ENCODE measurements at regions of chr5 and their contacts with region 1.

Region 1: DNA sequence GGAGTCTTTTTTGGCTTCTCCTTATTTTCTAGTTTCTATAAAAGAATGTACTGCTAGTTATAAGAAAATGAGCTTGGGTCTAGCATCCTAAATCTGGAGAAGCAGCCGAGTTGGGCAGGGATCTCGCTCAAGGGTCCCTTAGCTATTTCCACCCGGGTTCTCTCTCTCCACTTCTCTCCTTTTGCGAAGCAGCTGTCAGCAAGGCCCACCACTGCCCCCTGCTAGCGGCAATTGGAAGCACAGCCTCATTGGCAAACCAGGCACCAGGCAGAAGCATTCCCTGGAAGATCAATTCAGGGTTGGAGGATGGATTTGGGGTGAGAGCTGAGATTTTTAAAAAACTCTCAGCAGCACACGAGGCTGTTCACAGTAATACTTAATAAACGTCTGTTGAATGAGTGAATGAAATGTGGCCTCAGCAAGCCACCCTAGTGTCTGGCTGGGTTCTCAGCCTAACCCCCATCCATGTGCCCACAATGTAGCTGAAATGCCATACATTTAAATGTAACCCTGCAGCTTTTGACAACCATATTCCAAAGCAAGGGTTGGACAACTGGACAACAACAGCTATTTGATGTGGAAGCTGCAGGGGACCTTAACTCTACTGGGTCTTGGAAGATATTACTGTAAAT is 34.6 kb upstream of the TNIP1 start:
- DNase-seq: peak; percentile 84
- ATAC-seq: peak; percentile 76
- H3K4me3 Mint-ChIP-seq: no peak overlapping the region
- H3K27ac Mint-ChIP-seq: peak overlapping the region; percentile 24
- H3K4me1 Mint-ChIP-seq: peaks cover 2% of the 10 kb centered on the region
- H3K27me3 Mint-ChIP-seq: no peaks in the 10 kb centered on the region

Region 2: GRCh38 chr5:150560401-150561193 is 554.8 kb before region 1 on chr5:
- CTCF ChIA-PET with region 1: no interaction called
- POLR2A ChIA-PET with region 1: no interaction called
- intact Hi-C with region 1: loop called in 1 of 2 experiments (anchors 10 kb)
- DNase-seq: peak; percentile 92
- ATAC-seq: peak; percentile 97
- H3K4me3 Mint-ChIP-seq: no peak overlapping the region
- H3K27ac Mint-ChIP-seq: no peak overlapping the region
- H3K4me1 Mint-ChIP-seq: no peaks in the 10 kb centered on the region
- H3K27me3 Mint-ChIP-seq: no peaks in the 10 kb centered on the region

Region 3: DNA sequence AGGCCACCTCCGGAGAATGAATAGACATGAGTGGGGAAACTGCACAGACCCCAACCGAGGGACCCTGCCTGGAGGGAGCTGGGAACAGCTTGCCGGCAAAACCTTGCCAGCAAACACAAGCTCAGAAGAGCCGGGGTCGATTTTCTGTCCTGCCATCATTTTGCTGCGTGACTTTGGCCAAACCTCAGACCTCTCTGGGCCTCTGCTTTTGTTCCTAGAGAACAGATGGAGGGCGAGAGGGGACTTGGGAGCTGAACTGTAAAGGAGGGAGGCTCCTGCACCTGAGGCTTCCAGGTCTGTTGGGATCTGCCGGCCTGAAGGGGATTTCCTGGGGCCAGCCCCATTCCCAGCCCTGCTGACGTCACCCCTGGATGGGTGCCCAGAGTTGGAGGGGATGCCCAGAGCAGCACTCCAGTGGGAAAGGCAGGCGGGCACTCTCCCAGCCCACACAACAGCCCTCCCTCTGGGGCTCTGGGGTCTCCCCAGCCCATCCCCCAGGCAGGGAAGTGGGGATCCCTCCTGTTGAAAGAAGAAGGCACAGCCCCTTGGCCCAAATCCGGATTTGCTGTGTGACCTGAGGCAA is 515.4 kb before region 1 on chr5:
- CTCF ChIA-PET with region 1: no interaction called
- POLR2A ChIA-PET with region 1: no interaction called
- intact Hi-C with region 1: no loop called
- DNase-seq: no peak
- ATAC-seq: no peak
- H3K4me3 Mint-ChIP-seq: no peak overlapping the region
- H3K27ac Mint-ChIP-seq: no peak overlapping the region
- H3K4me1 Mint-ChIP-seq: no peaks in the 10 kb centered on the region
- H3K27me3 Mint-ChIP-seq: no peaks in the 10 kb centered on the region

Region 4: GRCh38 chr5:150642567-150642927 is 472.8 kb before region 1 on chr5:
- CTCF ChIA-PET with region 1: no interaction called
- POLR2A ChIA-PET with region 1: no interaction called
- intact Hi-C with region 1: no loop called
- DNase-seq: no peak
- ATAC-seq: no peak
- H3K4me3 Mint-ChIP-seq: no peak overlapping the region
- H3K27ac Mint-ChIP-seq: no peak overlapping the region
- H3K4me1 Mint-ChIP-seq: no peaks in the 10 kb centered on the region
- H3K27me3 Mint-ChIP-seq: peaks cover 4% of the 10 kb centered on the region

Region 5: DNA sequence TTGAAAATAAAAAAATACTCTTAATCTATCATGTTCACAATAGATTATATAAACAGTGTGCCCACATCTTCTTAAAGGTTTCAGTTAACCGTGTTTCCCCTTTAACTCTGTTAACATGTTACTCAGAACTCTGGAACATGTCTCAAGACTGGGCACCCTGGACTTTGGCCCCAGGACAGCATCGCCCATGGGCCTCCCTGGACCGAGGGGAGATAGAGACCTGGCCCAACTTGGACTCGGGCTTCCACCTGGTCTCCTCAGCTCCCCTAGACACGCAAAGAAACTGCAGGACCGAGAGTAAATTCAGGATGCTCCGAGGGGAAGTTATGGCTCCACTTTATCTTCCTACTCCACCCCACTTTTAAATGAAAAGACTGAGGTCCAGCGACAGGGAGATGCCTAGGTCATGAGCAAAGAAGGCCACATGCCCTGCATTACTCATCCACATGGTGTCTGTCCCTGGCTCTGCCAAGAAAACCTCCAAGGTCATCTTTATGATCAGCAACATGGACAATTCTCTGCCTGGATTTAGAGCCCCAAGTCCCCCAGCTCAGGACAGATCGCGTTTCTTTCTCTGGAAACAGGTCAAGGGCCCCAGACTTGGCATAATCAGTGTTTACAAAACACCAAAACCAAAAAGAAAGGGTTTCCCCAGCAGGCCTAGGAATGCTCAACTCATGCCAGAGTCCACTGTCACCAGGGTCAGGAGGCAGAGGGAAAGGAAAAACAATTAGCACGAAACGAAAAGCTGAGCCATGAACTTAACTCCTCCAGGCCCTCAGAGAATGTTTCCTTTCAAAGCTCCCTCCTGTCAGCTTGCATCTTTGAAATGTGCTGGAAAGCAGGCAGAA is 77.6 kb before region 1 on chr5:
- CTCF ChIA-PET with region 1: interaction called, 17 read pairs
- POLR2A ChIA-PET with region 1: no interaction called
- intact Hi-C with region 1: no loop called
- DNase-seq: peak; percentile 0
- ATAC-seq: no peak
- H3K4me3 Mint-ChIP-seq: no peak overlapping the region
- H3K27ac Mint-ChIP-seq: no peak overlapping the region
- H3K4me1 Mint-ChIP-seq: peaks cover 19% of the 10 kb centered on the region
- H3K27me3 Mint-ChIP-seq: no peaks in the 10 kb centered on the region

Region 6: DNA sequence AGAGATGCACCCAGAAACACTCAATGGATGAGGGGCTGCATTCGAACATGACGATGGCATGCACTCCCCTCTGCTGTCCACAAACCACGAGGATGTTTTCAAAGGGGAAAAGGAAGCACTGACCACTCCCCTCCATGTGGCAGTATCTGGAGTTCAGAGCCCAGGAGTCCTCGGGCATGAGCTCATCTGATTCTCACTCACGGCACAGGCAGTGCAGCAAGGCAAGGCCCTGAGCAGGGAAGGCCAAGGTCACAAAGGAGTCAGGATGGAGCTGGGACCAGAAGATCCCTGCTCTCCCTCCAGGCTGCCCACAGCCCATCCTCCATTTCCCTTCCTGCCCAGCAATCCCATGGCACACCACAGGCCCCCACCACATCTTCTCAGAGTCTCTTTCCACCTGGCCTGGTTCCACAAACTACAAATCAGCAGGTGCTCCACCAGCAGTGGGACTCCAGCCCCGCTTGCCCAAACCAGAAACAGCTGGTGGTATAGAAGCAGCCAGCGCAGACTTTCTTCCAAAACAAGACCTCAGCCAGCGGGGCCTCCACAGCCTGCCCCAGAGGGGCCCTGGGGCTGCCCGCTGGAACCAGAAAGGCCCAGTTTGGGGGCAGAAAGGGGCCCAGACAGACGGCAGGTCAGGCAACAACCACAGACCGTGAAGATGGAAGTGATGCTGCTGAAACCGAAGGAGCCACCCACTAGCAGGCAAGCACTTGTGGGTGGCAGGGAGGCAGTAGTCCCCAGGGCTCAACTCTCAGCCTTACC is 46.8 kb before region 1 on chr5:
- CTCF ChIA-PET with region 1: interaction called, 12 read pairs
- POLR2A ChIA-PET with region 1: no interaction called
- intact Hi-C with region 1: no loop called
- DNase-seq: peak; percentile 75
- ATAC-seq: peak; percentile 60
- H3K4me3 Mint-ChIP-seq: peak overlapping the region; percentile 48
- H3K27ac Mint-ChIP-seq: peak overlapping the region; percentile 91
- H3K4me1 Mint-ChIP-seq: peaks cover 97% of the 10 kb centered on the region
- H3K27me3 Mint-ChIP-seq: no peaks in the 10 kb centered on the region

Region 7: DNA sequence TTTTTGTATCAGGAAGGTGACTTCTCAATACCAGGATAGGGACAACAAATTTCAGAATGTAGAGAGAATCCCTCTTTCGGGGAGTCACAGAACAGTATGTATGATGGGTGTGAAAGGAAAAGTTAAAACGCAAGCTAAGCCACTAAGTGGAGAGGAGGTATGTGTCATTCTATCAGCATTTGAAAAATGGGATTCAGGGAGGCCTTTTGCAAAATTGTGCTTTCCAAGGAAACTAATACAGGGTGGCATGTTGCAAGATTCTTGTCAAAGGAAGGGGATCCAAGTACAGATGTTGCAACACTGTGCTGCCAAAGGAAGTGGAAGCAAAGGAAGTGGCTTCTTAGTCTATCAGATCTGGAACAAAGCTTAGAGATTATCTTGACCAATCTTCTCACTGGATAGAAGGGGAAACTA is 21.9 kb before region 1 on chr5:
- CTCF ChIA-PET with region 1: interaction called, 74 read pairs
- POLR2A ChIA-PET with region 1: no interaction called
- intact Hi-C with region 1: no loop called
- DNase-seq: no peak
- ATAC-seq: peak; percentile 5
- H3K4me3 Mint-ChIP-seq: peak overlapping the region; percentile 54
- H3K27ac Mint-ChIP-seq: peak overlapping the region; percentile 93
- H3K4me1 Mint-ChIP-seq: peaks cover 63% of the 10 kb centered on the region
- H3K27me3 Mint-ChIP-seq: no peaks in the 10 kb centered on the region

Region 8: GRCh38 chr5:151141535-151141934 is 26.1 kb after region 1 on chr5:
- CTCF ChIA-PET with region 1: interaction called, 16 read pairs
- POLR2A ChIA-PET with region 1: interaction called, 3 read pairs
- intact Hi-C with region 1: no loop called
- DNase-seq: peak; percentile 82
- ATAC-seq: peak; percentile 94
- H3K4me3 Mint-ChIP-seq: peak overlapping the region; percentile 64
- H3K27ac Mint-ChIP-seq: peak overlapping the region; percentile 82
- H3K4me1 Mint-ChIP-seq: peaks cover 85% of the 10 kb centered on the region
- H3K27me3 Mint-ChIP-seq: no peaks in the 10 kb centered on the region

Region 9: DNA sequence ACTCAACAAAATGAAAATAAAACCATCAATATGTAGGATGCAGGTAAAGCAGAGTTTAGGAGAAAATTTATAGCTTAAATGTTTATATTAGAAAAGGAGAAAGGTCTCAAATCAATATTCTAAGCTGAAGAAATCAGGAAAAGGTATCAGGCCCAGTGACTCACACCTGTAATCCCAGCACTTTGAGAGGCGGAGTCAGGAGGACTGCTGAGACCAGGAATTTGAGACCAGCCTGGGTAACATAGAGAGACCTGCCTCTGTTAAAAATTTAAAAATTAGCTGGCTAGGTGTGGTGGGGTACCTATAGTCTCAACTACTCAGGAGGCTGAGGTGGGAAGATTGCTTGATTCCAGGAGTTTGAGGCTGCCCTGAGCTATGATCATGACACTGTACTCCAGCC is 76.3 kb after region 1 on chr5:
- CTCF ChIA-PET with region 1: interaction called, 11 read pairs
- POLR2A ChIA-PET with region 1: no interaction called
- intact Hi-C with region 1: no loop called
- DNase-seq: no peak
- ATAC-seq: no peak
- H3K4me3 Mint-ChIP-seq: no peak overlapping the region
- H3K27ac Mint-ChIP-seq: no peak overlapping the region
- H3K4me1 Mint-ChIP-seq: peaks cover 43% of the 10 kb centered on the region
- H3K27me3 Mint-ChIP-seq: no peaks in the 10 kb centered on the region

Region 10: DNA sequence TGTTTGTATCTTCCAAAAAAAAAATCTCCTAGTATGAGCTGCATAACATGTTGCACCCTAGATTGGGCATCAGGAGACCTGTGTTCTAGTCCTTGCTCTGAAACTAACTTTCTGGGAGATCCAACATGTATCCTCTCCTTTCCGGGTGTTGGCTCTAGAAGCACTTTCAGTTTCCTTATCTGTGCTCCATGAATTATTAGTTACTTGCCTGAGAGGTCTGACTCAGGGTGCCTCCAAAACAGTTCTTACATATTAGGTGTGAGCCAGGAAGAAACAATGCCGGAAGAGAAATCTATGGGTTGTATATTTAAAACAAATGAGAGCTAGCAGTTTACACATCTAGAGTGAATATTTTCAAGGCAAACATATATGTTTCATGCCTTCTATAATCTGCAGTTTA is 268.7 kb after region 1 on chr5:
- CTCF ChIA-PET with region 1: no interaction called
- POLR2A ChIA-PET with region 1: no interaction called
- intact Hi-C with region 1: no loop called
- DNase-seq: no peak
- ATAC-seq: no peak
- H3K4me3 Mint-ChIP-seq: no peak overlapping the region
- H3K27ac Mint-ChIP-seq: no peak overlapping the region
- H3K4me1 Mint-ChIP-seq: no peaks in the 10 kb centered on the region
- H3K27me3 Mint-ChIP-seq: peaks cover 15% of the 10 kb centered on the region